ENCODE measurements at regions of chr7 and their contacts with region 1.

Region 1: GRCh38 chr7:99489235-99489634 is 10.8 kb downstream of the ZNF394 start:
- DNase-seq: no peak
- ATAC-seq: peak; percentile 47; the same call in 1 of the 2 replicates
- H3K4me3 ChIP-seq: no peak overlapping the region
- H3K27ac ChIP-seq: no peak overlapping the region
- H3K4me1 ChIP-seq: no peaks in the 10 kb centered on the region
- H3K27me3 ChIP-seq: no peaks in the 10 kb centered on the region
- CTCF ChIP-seq: no peak

Region 2: DNA sequence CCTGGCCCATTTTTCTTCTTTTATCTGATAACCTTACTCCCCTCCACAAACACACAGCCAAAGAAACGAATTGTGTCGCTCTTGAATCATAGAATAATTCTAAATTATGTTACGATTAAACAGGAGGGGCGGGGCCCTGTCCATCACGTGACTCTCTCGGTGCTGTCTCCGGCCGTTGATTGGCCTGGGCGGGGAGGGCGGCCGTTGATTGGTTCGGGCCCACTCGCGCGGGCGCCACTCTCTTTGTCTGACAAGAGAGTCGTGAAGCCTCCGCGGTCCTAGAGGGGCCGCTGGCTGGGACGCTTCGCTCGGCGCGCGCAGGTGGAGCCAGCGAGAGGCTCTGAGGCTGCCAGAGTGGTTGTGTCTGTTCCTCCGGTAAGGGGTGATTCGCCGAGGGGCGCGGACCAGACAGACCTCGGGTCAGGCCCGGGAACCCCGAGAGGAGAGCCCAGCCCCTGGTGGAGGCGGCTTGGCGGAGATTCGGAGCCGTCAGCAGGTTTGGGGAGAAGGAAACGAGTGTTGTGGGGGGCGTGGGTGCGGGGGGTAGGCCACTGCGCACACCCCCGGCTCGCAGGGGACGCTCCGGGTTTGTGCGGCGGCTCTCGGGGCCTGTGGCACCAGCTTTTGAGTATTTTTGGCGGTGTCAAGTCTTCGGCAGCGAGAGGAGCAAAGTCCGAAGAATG is 16.5 kb before region 1 on chr7 and contains the start of gene ZNF789:
- CTCF ChIA-PET with region 1: no interaction called
- POLR2A ChIA-PET with region 1: interaction called, 12 read pairs
- in situ Hi-C with region 1: no loop called
- intact Hi-C with region 1: no loop called
- DNase-seq: peak; percentile 88
- ATAC-seq: peak; percentile 97
- H3K4me3 ChIP-seq: peak within 1 kb of the TSS; percentile 93 to 97
- H3K27ac ChIP-seq: peak within 1 kb of the TSS; percentile 94
- H3K4me1 ChIP-seq: peaks cover 6% of the 10 kb centered on the region
- H3K27me3 ChIP-seq: no peaks in the 10 kb centered on the region
- CTCF ChIP-seq: no peak
- total RNA-seq, gene ZNF789: 15.1 TPM

Region 3: DNA sequence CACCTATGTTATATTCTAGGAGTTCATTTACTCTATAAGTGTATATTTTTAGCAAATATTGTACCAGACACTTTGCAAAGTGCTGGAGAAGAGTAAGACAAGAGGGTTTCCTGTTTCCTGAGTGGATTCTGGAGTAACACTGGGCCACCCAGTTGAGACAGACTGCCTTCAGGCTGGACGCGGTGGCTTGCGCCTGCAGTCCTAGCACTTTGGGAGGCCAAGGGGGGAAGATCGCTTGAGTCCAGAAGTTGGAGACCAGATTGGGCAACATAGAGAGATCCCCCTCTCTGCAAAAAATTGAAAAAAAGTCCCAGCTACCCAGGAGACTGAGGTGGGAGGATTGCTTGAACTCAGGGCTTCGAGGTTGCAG is 126.7 kb after region 1 on chr7:
- CTCF ChIA-PET with region 1: no interaction called
- POLR2A ChIA-PET with region 1: interaction called, 13 read pairs
- in situ Hi-C with region 1: no loop called
- intact Hi-C with region 1: no loop called
- DNase-seq: no peak
- ATAC-seq: no peak; the same call in 1 of the 2 replicates
- H3K4me3 ChIP-seq: peak overlapping the region; percentile 92 to 95
- H3K27ac ChIP-seq: no peak overlapping the region; the same call in 1 of the 2 replicates
- H3K4me1 ChIP-seq: peaks cover 12% of the 10 kb centered on the region
- H3K27me3 ChIP-seq: no peaks in the 10 kb centered on the region; the same call in 1 of the 2 replicates
- CTCF ChIP-seq: no peak

Measured in Panc1 (cell line).